ENCODE measurements at regions of chr2 and their contacts with region 1.

Region 1: GRCh38 chr2:9984217-9984739 is 32.8 kb downstream of the GRHL1 start:
- DNase-seq: no peak
- H3K4me3 Mint-ChIP-seq: no peak overlapping the region
- H3K27ac Mint-ChIP-seq: no peak overlapping the region
- H3K4me1 Mint-ChIP-seq: peaks cover 14% of the 10 kb centered on the region
- H3K27me3 Mint-ChIP-seq: peaks cover 40% of the 10 kb centered on the region

Region 2: DNA sequence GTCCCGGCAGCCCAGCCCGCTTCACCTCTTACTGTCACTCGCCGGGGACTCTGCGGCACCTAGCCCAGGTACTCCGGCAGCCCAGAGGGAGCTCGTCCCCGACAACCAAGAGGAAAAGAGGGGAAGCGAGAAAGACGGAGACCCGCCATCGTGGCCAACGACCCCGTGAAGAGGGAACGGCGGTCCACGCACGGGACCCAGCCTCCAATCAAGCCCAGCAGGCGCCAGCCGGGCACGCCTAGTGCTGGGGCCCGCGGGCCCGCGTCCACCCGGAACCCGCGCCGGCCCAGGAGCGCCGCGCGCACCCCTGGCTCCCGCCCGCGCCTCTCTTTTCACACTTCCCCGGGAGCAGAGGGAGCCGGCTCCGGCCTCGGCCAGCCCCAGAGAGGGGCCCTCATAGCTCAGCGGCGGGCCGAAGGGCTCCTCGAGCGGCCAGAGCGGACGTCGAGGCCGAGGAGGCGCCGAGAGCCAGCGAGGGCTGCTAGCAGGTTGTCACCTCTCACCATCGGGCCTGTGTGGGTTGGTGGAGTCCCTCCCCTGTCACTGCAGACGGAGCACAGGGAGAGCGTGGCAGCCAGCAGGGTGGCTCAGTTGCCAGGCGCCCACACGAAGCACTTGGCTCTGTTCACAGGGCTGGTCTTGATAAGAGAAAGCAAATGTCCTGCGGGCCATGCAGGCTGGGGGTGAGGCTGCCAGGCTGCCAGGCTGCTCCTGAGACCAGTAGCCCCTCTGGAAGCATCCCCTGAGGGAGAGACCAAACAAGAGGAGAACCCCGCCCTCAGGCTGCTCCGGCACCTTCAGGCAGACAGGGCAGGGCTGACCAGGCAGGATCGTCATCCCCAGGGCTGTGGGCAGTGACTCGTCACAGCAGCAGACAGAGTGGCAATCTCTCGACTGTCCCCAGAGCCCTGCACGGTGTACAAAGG is 22.2 kb after region 1 on chr2:
- CTCF ChIA-PET with region 1: interaction called, 10 read pairs
- DNase-seq: no peak
- H3K4me3 Mint-ChIP-seq: no peak overlapping the region
- H3K27ac Mint-ChIP-seq: no peak overlapping the region
- H3K4me1 Mint-ChIP-seq: no peaks in the 10 kb centered on the region
- H3K27me3 Mint-ChIP-seq: peaks cover 61% of the 10 kb centered on the region

Region 3: DNA sequence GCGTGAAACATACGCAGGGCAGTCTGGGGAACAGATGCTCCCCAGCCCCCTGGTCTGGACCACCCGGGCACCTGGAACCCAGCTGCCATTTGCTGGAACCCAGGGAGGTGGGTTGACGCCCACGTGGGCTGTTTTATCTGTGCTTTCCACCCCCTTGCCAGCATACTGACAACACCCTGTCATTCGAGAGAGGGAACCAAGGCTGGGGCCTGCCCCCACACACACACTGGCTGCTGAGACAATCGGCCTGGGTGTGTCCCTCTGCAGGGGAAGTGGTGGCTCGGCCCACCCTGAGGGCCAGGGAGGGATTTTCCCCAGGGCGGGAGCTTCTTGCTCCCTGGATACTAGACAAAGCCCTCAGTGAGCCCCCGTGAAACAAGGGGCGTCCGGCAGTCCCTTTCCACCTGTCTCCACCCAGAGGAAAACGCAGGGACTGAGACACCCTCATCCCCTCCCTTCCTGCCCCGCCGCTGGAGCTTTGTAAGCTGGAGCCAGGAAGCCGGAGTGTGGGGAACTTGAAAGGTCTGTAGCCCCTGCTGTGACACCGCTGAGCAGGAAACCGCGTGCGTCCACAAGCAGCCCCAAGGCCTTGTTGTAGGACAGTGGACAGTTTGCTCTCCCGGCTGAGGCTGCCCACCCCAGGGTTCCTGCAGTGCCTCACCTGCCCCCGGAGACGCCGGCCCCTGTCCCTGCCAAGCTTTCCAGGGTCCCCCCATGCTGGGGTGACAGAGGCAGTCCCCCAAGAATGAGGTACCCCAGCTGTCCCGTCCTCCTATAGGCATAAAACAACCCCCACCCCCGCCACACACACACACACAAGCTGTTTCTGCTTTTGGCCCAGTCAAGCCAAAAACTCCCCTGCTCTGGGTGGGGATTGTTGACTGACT is 45.0 kb after region 1 on chr2:
- CTCF ChIA-PET with region 1: interaction called, 16 read pairs
- DNase-seq: peak; percentile 74
- H3K4me3 Mint-ChIP-seq: peak overlapping the region; percentile 64
- H3K27ac Mint-ChIP-seq: peak overlapping the region; percentile 87
- H3K4me1 Mint-ChIP-seq: peaks cover 34% of the 10 kb centered on the region
- H3K27me3 Mint-ChIP-seq: peaks cover 26% of the 10 kb centered on the region

Region 4: GRCh38 chr2:10043906-10044601 is 59.8 kb after region 1 on chr2:
- CTCF ChIA-PET with region 1: interaction called, 90 read pairs
- DNase-seq: peak; percentile 92
- H3K4me3 Mint-ChIP-seq: peak overlapping the region; percentile 62
- H3K27ac Mint-ChIP-seq: peak overlapping the region; percentile 89
- H3K4me1 Mint-ChIP-seq: peaks cover 34% of the 10 kb centered on the region
- H3K27me3 Mint-ChIP-seq: peaks cover 64% of the 10 kb centered on the region